Adrenal gland (tissue), 19 donors: ENCODE measurements at regions of chr1 and their contacts with region 1.

Region 1: DNA sequence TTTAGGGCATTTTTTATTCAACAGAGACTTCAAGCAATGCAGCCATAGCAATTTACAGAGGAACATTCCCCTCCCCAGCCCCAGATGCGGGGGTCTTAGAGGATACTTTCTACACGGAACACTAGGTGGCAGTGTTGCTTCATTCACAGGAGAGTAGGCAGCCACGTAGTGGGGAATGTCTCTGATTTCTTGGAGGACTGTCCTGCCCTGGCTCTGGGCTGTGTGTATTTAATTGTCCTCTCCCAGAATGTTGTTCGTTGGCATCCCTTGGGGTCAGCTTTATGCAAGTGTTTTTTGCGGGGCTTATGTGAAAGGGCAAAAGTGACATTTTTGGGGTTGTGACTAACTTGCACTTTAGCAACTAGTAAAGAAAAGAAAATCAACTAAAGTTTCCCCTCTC is 96.9 kb downstream of the PAPPA2 start:
- DNase-seq: peak; percentile 33 to 70 (median 53)
- H3K4me3 ChIP-seq: no peak overlapping the region
- H3K27ac ChIP-seq: no peak overlapping the region
- H3K4me1 ChIP-seq: no peaks in the 10 kb centered on the region
- H3K27me3 ChIP-seq: peaks cover 3% of the 10 kb centered on the region
- CTCF ChIP-seq: peak; percentile 76 to 91 (median 84)
- POLR2A ChIP-seq: no peak

Region 2: GRCh38 chr1:176374967-176375569 is 184.8 kb before region 1 on chr1:
- intact Hi-C with region 1: no loop called
- DNase-seq: peak; percentile 66 to 93 (median 81)
- H3K4me3 ChIP-seq: no peak overlapping the region
- H3K27ac ChIP-seq: no peak overlapping the region
- H3K4me1 ChIP-seq: no peaks in the 10 kb centered on the region
- H3K27me3 ChIP-seq: no peaks in the 10 kb centered on the region
- CTCF ChIP-seq: peak; percentile 65 to 81 (median 74)
- POLR2A ChIP-seq: no peak

Region 3: GRCh38 chr1:176617881-176618280 is 58.0 kb after region 1 on chr1:
- intact Hi-C with region 1: no loop called
- DNase-seq: no peak
- H3K4me3 ChIP-seq: no peak overlapping the region
- H3K27ac ChIP-seq: no peak overlapping the region
- H3K4me1 ChIP-seq: no peaks in the 10 kb centered on the region
- H3K27me3 ChIP-seq: no peaks in the 10 kb centered on the region
- CTCF ChIP-seq: no peak
- POLR2A ChIP-seq: no peak

Region 4: DNA sequence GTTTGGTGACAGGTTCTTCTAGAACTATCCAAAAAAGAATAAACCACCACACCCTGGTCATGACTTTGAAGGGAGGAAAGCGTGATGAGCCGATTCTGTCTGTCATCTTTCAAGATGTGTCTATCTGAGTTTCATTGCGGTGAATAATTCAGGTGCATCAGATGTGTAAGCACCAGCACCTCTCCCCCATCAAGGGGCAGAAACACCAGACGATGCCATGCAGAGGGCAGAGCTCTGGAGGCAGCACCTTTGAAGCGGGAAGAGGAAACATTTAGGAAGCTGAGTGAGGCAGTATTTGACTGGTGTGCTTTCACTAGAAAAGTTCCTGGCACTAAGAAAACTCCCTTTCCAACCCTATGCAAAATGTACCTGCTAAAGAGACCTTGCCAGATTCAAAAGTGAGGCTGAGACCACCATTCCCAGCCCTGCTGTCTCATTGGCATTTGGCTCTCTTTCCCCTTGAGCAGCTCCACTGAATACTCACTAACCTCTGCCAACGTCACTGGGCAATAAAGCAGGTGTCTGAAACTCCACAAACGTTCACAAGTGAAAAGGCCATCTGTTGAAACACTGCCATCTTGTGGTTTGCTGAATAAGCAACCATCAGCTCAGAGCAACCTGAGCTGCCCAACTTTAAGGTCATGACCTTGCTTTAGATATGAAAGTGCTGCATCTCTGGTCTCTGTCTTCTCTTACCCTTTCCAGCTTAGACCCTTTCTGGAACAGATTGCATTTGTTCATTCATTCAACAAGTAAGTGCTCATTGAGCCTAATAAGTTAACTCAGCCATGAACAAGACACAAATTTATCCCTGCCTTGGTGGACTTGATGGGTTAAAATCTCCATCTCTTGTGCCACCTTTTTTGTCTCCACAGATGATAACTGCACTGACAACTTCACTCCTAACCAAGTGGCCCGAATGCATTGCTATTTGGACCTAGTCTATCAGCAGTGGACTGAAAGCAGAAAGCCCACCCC is 131.7 kb after region 1 on chr1:
- intact Hi-C with region 1: loop called (anchors 5 to 10 kb)
- DNase-seq: peak; percentile 21 to 72 (median 35)
- H3K4me3 ChIP-seq: no peak overlapping the region
- H3K27ac ChIP-seq: no peak overlapping the region
- H3K4me1 ChIP-seq: no peaks in the 10 kb centered on the region
- H3K27me3 ChIP-seq: no peaks in the 10 kb centered on the region
- CTCF ChIP-seq: peak; percentile 45 to 66 (median 64)
- POLR2A ChIP-seq: no peak

Region 5: DNA sequence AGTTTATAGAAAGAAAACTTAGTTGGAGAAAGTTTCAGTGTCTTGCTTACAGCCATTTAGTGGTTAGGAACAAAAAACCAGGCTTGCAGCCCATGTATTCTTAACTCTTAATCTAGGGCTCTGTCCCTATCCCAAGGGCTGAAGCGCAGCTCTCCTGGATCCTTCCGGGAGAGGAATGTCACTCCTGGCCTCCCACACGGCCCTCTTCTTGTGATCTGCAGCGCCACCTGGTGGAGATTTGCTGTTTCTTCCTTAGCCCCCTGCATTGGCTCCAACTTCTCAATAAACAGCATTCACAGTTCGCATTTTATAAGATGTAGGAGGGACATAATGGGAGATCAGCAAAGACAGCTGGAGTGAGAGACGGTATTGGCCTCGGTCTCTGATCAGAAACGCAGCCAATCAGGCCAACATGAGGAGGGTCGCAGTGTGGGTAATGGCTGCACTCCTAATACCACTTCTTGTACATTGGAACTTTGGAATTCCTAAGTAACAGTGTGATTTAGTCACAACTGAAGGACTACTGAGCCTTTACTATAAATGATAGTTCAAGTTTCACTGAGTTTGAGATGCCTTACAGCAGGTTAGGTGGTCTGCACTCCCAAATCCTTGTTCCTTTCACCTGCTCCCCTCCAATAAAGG is 321.2 kb after region 1 on chr1:
- intact Hi-C with region 1: loop called in 1 of 2 experiments (anchors 5 kb)
- DNase-seq: peak; percentile 56 to 84 (median 76)
- H3K4me3 ChIP-seq: no peak overlapping the region
- H3K27ac ChIP-seq: no peak overlapping the region
- H3K4me1 ChIP-seq: no peaks in the 10 kb centered on the region
- H3K27me3 ChIP-seq: no peaks in the 10 kb centered on the region
- CTCF ChIP-seq: peak; percentile 66 to 85 (median 76)
- POLR2A ChIP-seq: no peak